ENCODE measurements at regions of chr7 and their contacts with region 1.

Region 1: GRCh38 chr7:96870156-96870555 is 135.2 kb upstream of the DLX6 start:
- DNase-seq: peak; percentile 56
- H3K4me3 Mint-ChIP-seq: peak overlapping the region; percentile 43
- H3K27ac Mint-ChIP-seq: peak overlapping the region; percentile 92
- H3K4me1 Mint-ChIP-seq: peaks cover 13% of the 10 kb centered on the region
- H3K27me3 Mint-ChIP-seq: no peaks in the 10 kb centered on the region
- CTCF ChIP-seq: no peak

Region 2: GRCh38 chr7:96800824-96801223 is 69.3 kb before region 1 on chr7:
- CTCF ChIA-PET with region 1: no interaction called
- POLR2A ChIA-PET with region 1: no interaction called
- intact Hi-C with region 1: no loop called
- DNase-seq: peak; percentile 65
- H3K4me3 Mint-ChIP-seq: no peak overlapping the region
- H3K27ac Mint-ChIP-seq: no peak overlapping the region
- H3K4me1 Mint-ChIP-seq: peaks cover 15% of the 10 kb centered on the region
- H3K27me3 Mint-ChIP-seq: peaks cover 64% of the 10 kb centered on the region
- CTCF ChIP-seq: no peak

Region 3: GRCh38 chr7:96952974-96953391 is 82.8 kb after region 1 on chr7:
- CTCF ChIA-PET with region 1: no interaction called
- POLR2A ChIA-PET with region 1: interaction called, 11 read pairs
- intact Hi-C with region 1: no loop called
- DNase-seq: peak; percentile 13
- H3K4me3 Mint-ChIP-seq: no peak overlapping the region
- H3K27ac Mint-ChIP-seq: no peak overlapping the region
- H3K4me1 Mint-ChIP-seq: peaks cover 41% of the 10 kb centered on the region
- H3K27me3 Mint-ChIP-seq: peaks cover 11% of the 10 kb centered on the region
- CTCF ChIP-seq: no peak